Activated B cell treated with CpG ODN at 0.5 μM for 24 hours (primary cell): ENCODE measurements at regions of chr14 and their contacts with region 1.

Region 1: DNA sequence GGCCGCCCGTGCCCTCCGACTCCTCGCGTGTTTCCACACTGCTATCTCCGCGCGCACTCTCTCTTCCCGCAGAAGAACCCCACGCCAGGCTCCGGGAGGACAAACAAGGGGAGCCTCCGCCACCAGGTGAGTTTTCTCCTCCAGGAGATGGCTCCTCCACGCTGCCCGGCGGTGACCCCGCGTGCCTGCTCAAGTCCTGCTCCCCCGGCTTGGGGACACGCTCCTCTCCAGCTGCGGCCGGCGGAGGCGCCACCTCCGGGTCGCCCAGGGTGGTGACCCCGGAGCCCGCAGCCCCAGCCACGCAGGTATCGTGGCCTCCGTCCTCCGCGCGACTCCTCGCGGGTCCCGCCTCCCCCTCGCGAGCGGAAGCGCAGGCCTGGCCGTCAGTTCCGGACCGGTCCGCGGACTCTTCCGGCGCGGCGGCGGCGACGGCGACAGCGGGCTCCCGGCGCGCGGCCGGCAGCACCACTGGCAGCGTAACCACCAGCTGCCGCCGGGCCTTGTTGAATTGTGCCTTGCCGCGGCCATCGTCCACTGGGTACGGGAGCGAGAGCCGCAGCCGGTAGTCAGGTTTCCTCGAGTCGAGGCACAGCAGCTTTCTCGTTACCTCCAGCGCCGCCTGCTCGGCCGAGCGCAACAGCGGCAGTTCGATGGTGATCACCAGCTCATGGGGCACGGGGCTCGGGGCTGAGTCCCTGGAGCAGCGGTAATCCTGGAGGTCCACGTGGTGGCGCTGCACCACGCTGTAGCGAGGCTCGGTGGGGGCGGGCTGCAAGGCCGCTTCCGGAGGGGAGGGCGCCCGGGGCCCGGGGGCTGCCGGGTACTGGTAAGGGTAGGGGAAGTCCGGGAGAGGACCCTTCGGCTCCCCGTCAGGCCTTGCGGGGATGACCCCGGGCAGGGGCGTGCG is 1.2 kb downstream of the DNAAF2 start:
- DNase-seq: peak; percentile 92
- ATAC-seq: peak; percentile 80
- H3K4me3 Mint-ChIP-seq: peak overlapping the region; percentile 96
- H3K27ac Mint-ChIP-seq: peak overlapping the region; percentile 98
- H3K4me1 Mint-ChIP-seq: peaks cover 66% of the 10 kb centered on the region
- H3K27me3 Mint-ChIP-seq: no peaks in the 10 kb centered on the region
- CTCF ChIP-seq: no peak

Region 2: GRCh38 chr14:49461529-49462401 is 172.1 kb before region 1 on chr14:
- CTCF ChIA-PET with region 1: interaction called, 6 read pairs
- POLR2A ChIA-PET with region 1: interaction called, 4 read pairs
- intact Hi-C with region 1: loop called (anchors 5 kb)
- DNase-seq: no peak
- ATAC-seq: peak; percentile 81
- H3K4me3 Mint-ChIP-seq: no peak overlapping the region
- H3K27ac Mint-ChIP-seq: no peak overlapping the region
- H3K4me1 Mint-ChIP-seq: no peaks in the 10 kb centered on the region
- H3K27me3 Mint-ChIP-seq: peaks cover 5% of the 10 kb centered on the region
- CTCF ChIP-seq: peak; percentile 62

Region 3: DNA sequence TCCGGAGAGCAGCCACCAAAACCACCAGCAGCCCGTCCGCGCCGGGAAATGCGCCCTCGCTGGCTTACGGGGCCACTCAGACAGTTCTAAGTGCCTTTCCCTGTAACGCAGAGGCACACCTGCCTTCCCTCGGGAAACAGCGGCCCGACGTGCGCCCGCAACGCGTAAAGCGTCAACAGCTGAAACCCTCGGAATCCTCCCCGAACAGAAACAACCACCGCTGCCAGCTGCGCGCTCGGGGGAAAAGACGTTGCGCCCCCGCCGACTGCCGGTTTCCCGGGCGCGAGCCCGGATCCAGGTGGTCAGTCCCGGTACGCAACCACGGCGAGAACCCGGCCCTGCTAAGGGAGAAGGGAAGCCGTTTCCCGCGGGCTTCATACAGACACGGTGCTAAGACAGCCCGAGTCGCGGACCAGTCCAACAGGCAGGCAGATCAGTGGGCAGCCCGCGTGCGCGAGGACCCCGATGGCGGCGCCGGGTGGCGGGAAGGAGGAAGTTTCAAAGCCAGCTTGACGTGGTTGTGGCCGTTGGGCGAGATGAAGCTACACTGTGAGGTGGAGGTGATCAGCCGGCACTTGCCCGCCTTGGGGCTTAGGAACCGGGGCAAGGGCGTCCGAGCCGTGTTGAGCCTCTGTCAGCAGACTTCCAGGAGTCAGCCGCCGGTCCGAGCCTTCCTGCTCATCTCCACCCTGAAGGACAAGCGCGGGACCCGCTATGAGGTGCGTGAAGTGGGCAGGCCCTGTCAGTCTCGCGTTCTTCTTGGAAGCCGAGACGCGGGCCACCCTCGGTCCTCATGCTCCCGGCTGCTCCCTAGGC is 35.2 kb before region 1 on chr14 and contains the start of gene LRR1:
- CTCF ChIA-PET with region 1: interaction called, 4 read pairs
- POLR2A ChIA-PET with region 1: interaction called, 117 read pairs
- intact Hi-C with region 1: loop called (anchors 1 kb)
- DNase-seq: peak; percentile 94
- ATAC-seq: peak; percentile 67
- H3K4me3 Mint-ChIP-seq: peak within 1 kb of the TSS; percentile 95
- H3K27ac Mint-ChIP-seq: peak within 1 kb of the TSS; percentile 96
- H3K4me1 Mint-ChIP-seq: peaks cover 60% of the 10 kb centered on the region
- H3K27me3 Mint-ChIP-seq: no peaks in the 10 kb centered on the region
- CTCF ChIP-seq: no peak
- total RNA-seq, gene LRR1: 15.1 and 19.9 TPM in 2 replicates

Region 4: DNA sequence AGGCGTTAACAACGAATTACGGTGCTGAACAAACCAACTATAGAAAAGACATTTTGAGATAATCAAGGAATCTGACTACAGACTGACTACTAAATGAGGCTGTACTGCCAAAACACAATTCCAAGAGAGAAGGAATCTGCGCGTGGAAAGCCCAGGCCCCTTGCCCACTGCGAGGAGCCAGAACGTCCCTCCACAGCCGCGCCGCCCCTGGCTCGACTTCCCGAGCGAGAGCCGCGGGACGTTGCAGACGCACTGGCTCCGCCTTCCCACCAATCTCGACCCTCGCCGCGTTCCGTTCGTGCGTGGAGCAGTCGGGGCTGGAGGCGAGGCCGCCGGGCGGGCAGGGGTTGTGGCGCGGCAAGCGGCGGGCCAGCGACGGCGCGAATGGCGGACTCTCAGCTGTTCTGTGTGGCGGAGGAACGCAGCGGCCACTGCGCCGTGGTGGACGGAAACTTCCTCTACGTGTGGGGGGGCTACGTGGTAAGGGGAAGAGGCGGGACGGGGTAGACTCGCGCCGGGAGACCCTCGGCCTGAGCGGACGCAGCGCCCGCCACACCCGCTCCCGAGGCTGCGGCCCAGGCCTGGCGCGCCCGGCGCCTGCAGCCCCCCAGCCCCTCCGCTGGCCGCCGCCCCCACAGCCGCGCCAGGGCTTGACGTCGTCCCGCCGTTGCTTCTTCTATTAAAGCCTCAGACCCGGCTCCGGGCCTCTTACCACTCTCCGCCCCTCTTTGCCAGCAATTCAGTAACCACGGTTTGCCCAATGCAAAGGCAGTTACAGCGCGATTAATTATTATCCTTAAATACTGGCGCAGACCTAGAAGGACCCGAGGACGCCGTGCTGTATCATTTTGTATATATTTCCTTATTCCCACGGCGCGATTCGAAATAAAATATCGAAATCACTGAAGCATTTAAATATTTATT is 59.2 kb after region 1 on chr14 and contains the start of gene KLHDC1:
- CTCF ChIA-PET with region 1: interaction called, 4 read pairs
- POLR2A ChIA-PET with region 1: interaction called, 19 read pairs
- intact Hi-C with region 1: loop called (anchors 1 kb)
- DNase-seq: peak; percentile 74
- ATAC-seq: peak; percentile 80
- H3K4me3 Mint-ChIP-seq: peak within 1 kb of the TSS; percentile 83
- H3K27ac Mint-ChIP-seq: peak within 1 kb of the TSS; percentile 84
- H3K4me1 Mint-ChIP-seq: peaks cover 24% of the 10 kb centered on the region
- H3K27me3 Mint-ChIP-seq: no peaks in the 10 kb centered on the region
- CTCF ChIP-seq: no peak
- total RNA-seq, gene KLHDC1: 5.7 and 6.9 TPM in 2 replicates

Region 5: DNA sequence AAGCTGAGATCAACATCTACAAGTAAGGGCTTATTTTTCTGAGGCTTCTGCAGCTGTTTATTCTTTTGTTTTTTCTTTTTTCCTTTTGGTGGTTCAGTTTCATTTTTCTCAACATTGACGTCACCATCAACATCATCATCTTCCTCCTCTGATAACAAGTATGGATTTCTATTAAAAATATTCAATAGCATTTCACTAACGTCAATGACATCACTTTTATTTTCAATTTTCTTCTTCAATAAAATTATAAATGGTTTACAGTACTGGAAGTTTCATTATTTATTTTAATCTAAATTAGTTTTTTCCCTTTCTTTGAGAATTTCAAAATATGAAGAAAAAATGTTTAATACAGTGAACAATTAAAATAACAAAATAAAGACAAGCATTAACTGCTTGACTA is 194.7 kb after region 1 on chr14:
- CTCF ChIA-PET with region 1: interaction called, 13 read pairs
- POLR2A ChIA-PET with region 1: no interaction called
- intact Hi-C with region 1: loop called (anchors 1 kb)
- DNase-seq: no peak
- ATAC-seq: no peak
- H3K4me3 Mint-ChIP-seq: no peak overlapping the region
- H3K27ac Mint-ChIP-seq: no peak overlapping the region
- H3K4me1 Mint-ChIP-seq: peaks cover 6% of the 10 kb centered on the region
- H3K27me3 Mint-ChIP-seq: no peaks in the 10 kb centered on the region
- CTCF ChIP-seq: no peak

Region 6: GRCh38 chr14:50231475-50232275 is 597.8 kb after region 1 on chr14 and contains the start of gene SOS2:
- CTCF ChIA-PET with region 1: no interaction called
- POLR2A ChIA-PET with region 1: interaction called, 5 read pairs
- intact Hi-C with region 1: loop called (anchors 1 kb)
- DNase-seq: peak; percentile 87
- ATAC-seq: peak; percentile 87
- H3K4me3 Mint-ChIP-seq: peak within 1 kb of the TSS; percentile 93
- H3K27ac Mint-ChIP-seq: peak within 1 kb of the TSS; percentile 92
- H3K4me1 Mint-ChIP-seq: peaks cover 35% of the 10 kb centered on the region
- H3K27me3 Mint-ChIP-seq: no peaks in the 10 kb centered on the region
- CTCF ChIP-seq: no peak
- total RNA-seq, gene SOS2: 29.1 and 32.0 TPM in 2 replicates

Region 7: GRCh38 chr14:50532502-50533240 is 898.8 kb after region 1 on chr14 and contains the start of gene MAP4K5:
- CTCF ChIA-PET with region 1: no interaction called
- POLR2A ChIA-PET with region 1: interaction called, 3 read pairs
- intact Hi-C with region 1: loop called (anchors 1 kb)
- DNase-seq: peak; percentile 83
- ATAC-seq: peak; percentile 94
- H3K4me3 Mint-ChIP-seq: peak within 1 kb of the TSS; percentile 84
- H3K27ac Mint-ChIP-seq: peak within 1 kb of the TSS; percentile 88
- H3K4me1 Mint-ChIP-seq: peaks cover 47% of the 10 kb centered on the region
- H3K27me3 Mint-ChIP-seq: no peaks in the 10 kb centered on the region
- CTCF ChIP-seq: no peak
- total RNA-seq, gene MAP4K5: 32.5 and 34.1 TPM in 2 replicates